Heart left ventricle (tissue), 16 donors: ENCODE measurements at regions of chr7 and their contacts with region 1.

Region 1: DNA sequence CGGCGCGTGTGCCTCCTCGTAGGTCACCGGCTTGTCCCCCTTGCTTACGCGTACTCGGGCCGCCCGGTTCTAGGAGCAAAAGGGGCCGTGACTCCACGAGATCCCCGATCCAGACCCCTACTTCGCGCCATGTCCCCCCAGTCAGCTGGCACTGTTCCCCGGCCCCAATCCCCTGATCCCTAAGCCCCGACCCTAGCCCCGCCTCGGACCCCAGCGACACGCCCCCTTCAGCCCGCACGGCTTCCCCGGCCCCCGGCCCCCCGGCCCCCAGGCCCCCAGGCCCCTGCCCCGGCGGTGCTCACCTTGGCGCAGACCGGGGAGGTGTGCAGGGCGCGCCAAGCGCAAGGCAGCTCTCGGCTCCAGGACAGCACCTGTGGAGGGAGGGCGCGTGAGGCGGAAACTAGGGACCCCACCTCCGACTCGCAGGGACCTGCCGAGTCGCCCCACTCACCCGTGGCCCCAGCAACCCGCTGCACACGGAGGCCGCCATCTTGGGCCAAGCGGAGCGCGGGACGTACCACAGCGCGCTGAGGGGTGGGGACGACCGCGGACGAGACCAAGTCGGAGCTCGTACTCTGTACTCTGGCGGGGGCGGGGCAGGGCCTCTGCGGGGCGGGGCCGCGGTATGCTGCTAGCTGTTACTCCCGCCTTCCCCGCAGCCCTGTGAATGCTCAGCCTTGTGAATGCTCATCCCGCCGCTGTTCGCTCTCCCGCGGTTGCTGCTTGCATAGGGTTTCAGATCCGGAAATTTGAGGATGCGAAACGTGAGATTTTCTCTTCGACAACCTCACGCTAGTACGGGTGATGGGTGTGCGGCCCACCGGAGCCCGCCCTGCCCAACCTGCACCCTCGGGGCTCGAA is at the start of gene MRPS24:
- DNase-seq: peak; percentile 95 to 97 (median 96)
- ATAC-seq: peak; percentile 96 to 98 (median 98)
- H3K4me3 ChIP-seq: peak within 1 kb of the TSS; percentile 54 to 97 (median 76)
- H3K27ac ChIP-seq: peak within 1 kb of the TSS; percentile 33 to 91 (median 82)
- H3K4me1 ChIP-seq: peaks cover 0 to 40% (median 32%) of the 10 kb centered on the region in 12 donors
- H3K27me3 ChIP-seq: no peaks in the 10 kb centered on the region
- CTCF ChIP-seq: no peak
- POLR2A ChIP-seq: peak in 1 of 2 donors; percentile 55
- total RNA-seq, gene MRPS24: 118 to 252 (median 151) TPM

Region 2: GRCh38 chr7:43906331-43907010 is 37.2 kb after region 1 on chr7 and contains the start of gene URGCP:
- intact Hi-C with region 1: loop called in 2 of 10 experiments (anchors 2 to 5 kb)
- DNase-seq: peak; percentile 55 to 81 (median 70)
- ATAC-seq: peak; percentile 30 to 87 (median 76)
- H3K4me3 ChIP-seq: peak within 1 kb of the TSS; percentile 67 to 95 (median 77)
- H3K27ac ChIP-seq: peak within 1 kb of the TSS; percentile 80 to 95 (median 90)
- H3K4me1 ChIP-seq: peaks cover 0 to 39% (median 25%) of the 10 kb centered on the region in 12 donors
- H3K27me3 ChIP-seq: no peaks in the 10 kb centered on the region
- CTCF ChIP-seq: no peak
- POLR2A ChIP-seq: peak in 1 of 2 donors; percentile 24
- total RNA-seq, gene URGCP: 28.2 to 43.7 (median 37.8) TPM

Region 3: DNA sequence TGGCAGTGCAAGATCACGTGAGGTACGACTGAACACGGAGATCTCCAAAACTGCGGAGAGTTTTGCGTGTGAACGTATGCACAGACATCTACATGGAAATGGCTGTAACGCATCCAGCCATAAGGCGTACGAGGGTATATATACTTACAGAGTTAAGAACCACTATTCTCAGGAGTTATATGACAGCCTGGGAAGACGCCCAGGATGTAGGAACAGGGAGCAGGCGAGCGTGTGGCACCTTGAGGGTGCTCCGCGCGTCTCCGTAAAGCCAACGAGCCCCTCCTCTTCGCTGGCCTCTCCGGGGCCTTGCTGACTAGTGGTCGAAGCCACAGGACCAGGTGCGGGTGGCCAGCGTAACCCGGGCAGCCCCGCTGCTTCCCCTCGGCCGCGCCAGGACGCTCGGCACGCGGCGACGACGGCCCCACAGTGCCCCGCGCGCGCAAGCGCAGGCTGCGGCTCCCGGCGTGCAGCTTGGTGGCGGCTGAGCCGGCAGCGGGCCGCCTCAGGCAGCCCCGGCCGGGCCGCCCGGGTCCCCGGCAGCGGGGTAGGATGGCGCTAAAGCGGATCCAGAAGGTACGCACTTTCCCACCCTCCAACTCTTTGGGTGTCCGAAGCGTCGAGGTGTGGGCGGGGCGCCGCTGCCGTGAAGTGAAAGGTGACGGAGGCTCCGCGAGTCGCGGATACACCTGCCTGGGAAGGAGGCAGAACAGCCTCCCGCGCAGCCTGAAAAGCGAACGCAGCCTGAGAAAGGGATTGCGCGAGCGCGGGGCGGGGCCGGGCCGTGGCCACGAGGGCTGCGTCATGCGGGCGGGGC is 57.0 kb after region 1 on chr7 and contains the start of gene UBE2D4:
- intact Hi-C with region 1: loop called in 2 of 10 experiments (anchors 5 kb)
- DNase-seq: peak; percentile 83 to 92 (median 88)
- ATAC-seq: peak; percentile 79 to 97 (median 96)
- H3K4me3 ChIP-seq: peak within 1 kb of the TSS; percentile 53 to 96 (median 76)
- H3K27ac ChIP-seq: peak within 1 kb of the TSS; percentile 83 to 99 (median 94)
- H3K4me1 ChIP-seq: peaks cover 0 to 20% (median 15%) of the 10 kb centered on the region in 12 donors
- H3K27me3 ChIP-seq: no peaks in the 10 kb centered on the region
- CTCF ChIP-seq: peak in 1 of 12 donors; percentile 18
- POLR2A ChIP-seq: peak; percentile 71 to 89
- total RNA-seq, gene UBE2D4: 35.1 to 69.8 (median 43.5) TPM